Natural killer cell (primary cell): ENCODE measurements at regions of chr2 and their contacts with region 1.

Region 1: GRCh38 chr2:156341452-156342253 is 9.1 kb upstream of the NR4A2 start:
- DNase-seq: peak; percentile 78 to 93
- ATAC-seq: peak; percentile 73 to 90 (median 74)
- H3K4me3 ChIP-seq: peak overlapping the region; percentile 100
- H3K4me3 Mint-ChIP-seq: peak overlapping the region; percentile 97
- H3K27ac ChIP-seq: peak overlapping the region; percentile 100
- H3K27ac Mint-ChIP-seq: peak overlapping the region; percentile 96 to 97
- H3K4me1 ChIP-seq: peaks cover 6% of the 10 kb centered on the region
- H3K4me1 Mint-ChIP-seq: peaks cover 24 to 25% of the 10 kb centered on the region in 2 donors
- H3K27me3 ChIP-seq: no peaks in the 10 kb centered on the region
- H3K27me3 Mint-ChIP-seq: no peaks in the 10 kb centered on the region
- CTCF ChIP-seq: no peak

Region 2: DNA sequence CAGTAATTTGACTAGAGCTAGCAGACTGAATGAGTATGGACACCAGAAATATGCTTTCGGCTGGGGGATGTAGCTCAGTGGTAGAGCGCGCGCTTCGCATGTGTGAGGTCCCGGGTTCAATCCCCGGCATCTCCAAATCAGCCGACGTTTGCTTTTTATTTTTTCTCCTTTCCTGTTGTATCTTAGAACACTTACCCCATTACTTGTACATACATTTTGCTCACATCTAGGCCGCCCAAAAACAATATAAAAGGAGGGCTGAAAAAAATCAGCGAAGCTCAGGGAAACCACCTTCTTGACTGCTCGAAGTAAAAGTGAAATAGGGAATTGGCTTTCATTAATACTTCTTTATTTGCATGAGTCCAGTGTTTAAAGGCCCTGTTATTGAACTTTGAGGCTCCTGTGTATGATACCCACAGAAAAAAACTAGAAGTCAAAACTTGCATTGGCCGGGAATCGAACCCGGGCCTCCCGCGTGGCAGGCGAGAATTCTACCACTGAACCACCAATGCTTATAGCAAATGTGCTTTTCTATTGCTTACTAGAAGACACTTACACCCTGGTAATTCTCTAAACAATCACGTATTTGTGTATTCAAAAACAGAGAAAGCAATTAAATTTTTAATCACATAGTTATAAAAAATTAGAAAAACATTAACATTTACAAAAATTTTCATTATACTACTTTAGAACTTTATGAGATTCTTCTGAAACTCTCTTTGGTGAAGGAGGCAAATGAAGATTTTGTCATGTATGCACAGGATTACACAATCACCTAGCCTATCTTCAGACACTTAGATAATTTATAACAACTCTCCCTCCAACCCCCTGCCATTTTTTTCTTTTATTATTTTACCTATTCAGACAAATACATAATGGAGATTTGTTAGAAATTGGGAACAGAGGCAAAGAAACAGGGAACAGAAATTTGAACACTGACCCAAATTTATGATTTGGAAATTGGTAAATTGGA is 59.3 kb after region 1 on chr2:
- intact Hi-C with region 1: loop called (anchors 2 kb)
- DNase-seq: peak; percentile 77 to 94
- ATAC-seq: peak; percentile 79 to 85 (median 83)
- H3K4me3 ChIP-seq: peak overlapping the region; percentile 67
- H3K4me3 Mint-ChIP-seq: peak overlapping the region; percentile 99
- H3K27ac ChIP-seq: peak overlapping the region; percentile 97
- H3K27ac Mint-ChIP-seq: peak overlapping the region; percentile 99 to 100
- H3K4me1 ChIP-seq: peaks cover 6% of the 10 kb centered on the region
- H3K4me1 Mint-ChIP-seq: peaks cover 29 to 32% of the 10 kb centered on the region in 2 donors
- H3K27me3 ChIP-seq: no peaks in the 10 kb centered on the region
- H3K27me3 Mint-ChIP-seq: peaks cover 6 to 12% of the 10 kb centered on the region in 2 donors
- CTCF ChIP-seq: no peak

Region 3: DNA sequence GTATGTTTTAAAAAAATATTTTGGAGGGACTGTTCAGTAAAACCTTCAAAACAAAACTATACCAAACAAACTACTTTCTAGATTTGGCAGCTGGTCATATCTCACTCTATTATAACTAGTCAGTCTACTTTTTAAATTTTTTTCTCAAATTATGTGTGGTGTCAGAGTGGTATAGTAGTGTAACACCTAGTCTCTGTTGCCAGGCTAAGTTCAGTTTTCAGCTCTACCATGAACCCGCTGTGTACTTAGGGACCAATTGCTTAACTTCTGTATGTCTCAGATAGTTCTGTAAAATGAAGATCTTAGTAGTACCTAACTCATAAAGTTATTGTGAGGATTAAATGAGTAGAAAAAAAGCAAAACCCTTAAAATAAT is 148.8 kb after region 1 on chr2:
- intact Hi-C with region 1: loop called (anchors 5 kb)
- DNase-seq: no peak
- ATAC-seq: peak; percentile 62 to 84 (median 78)
- H3K4me3 ChIP-seq: no peak overlapping the region
- H3K4me3 Mint-ChIP-seq: no peak overlapping the region
- H3K27ac ChIP-seq: no peak overlapping the region
- H3K27ac Mint-ChIP-seq: peak overlapping the region; percentile 62 to 65
- H3K4me1 ChIP-seq: peaks cover 5% of the 10 kb centered on the region
- H3K4me1 Mint-ChIP-seq: peaks cover 43 to 62% of the 10 kb centered on the region in 2 donors
- H3K27me3 ChIP-seq: no peaks in the 10 kb centered on the region
- H3K27me3 Mint-ChIP-seq: no peaks in the 10 kb centered on the region
- CTCF ChIP-seq: no peak